ENCODE measurements at regions of chr2 and their contacts with region 1.

Region 1: GRCh38 chr2:32375228-32375892 is 18.5 kb downstream of the BIRC6 start:
- DNase-seq: no peak
- ATAC-seq: no peak
- H3K4me3 ChIP-seq: no peak overlapping the region
- H3K4me3 Mint-ChIP-seq: no peak overlapping the region
- H3K27ac ChIP-seq: no peak overlapping the region
- H3K27ac Mint-ChIP-seq: peak overlapping the region in 1 of 2 donors; percentile 22
- H3K4me1 ChIP-seq: peaks cover 8 to 10% of the 10 kb centered on the region in 2 experiments
- H3K4me1 Mint-ChIP-seq: peaks cover 56 to 74% (median 66%) of the 10 kb centered on the region in 3 donors
- H3K27me3 ChIP-seq: no peaks in the 10 kb centered on the region
- H3K27me3 Mint-ChIP-seq: no peaks in the 10 kb centered on the region

Region 2: GRCh38 chr2:32342801-32343200 is 32.6 kb before region 1 on chr2:
- CTCF ChIA-PET with region 1: interaction called in 1 of 2 experiments, 15 read pairs
- POLR2A ChIA-PET with region 1: no interaction called
- DNase-seq: no peak
- ATAC-seq: no peak
- H3K4me3 ChIP-seq: no peak overlapping the region
- H3K4me3 Mint-ChIP-seq: no peak overlapping the region
- H3K27ac ChIP-seq: no peak overlapping the region
- H3K27ac Mint-ChIP-seq: no peak overlapping the region
- H3K4me1 ChIP-seq: no peaks in the 10 kb centered on the region
- H3K4me1 Mint-ChIP-seq: no peaks in the 10 kb centered on the region
- H3K27me3 ChIP-seq: no peaks in the 10 kb centered on the region
- H3K27me3 Mint-ChIP-seq: no peaks in the 10 kb centered on the region

Region 3: DNA sequence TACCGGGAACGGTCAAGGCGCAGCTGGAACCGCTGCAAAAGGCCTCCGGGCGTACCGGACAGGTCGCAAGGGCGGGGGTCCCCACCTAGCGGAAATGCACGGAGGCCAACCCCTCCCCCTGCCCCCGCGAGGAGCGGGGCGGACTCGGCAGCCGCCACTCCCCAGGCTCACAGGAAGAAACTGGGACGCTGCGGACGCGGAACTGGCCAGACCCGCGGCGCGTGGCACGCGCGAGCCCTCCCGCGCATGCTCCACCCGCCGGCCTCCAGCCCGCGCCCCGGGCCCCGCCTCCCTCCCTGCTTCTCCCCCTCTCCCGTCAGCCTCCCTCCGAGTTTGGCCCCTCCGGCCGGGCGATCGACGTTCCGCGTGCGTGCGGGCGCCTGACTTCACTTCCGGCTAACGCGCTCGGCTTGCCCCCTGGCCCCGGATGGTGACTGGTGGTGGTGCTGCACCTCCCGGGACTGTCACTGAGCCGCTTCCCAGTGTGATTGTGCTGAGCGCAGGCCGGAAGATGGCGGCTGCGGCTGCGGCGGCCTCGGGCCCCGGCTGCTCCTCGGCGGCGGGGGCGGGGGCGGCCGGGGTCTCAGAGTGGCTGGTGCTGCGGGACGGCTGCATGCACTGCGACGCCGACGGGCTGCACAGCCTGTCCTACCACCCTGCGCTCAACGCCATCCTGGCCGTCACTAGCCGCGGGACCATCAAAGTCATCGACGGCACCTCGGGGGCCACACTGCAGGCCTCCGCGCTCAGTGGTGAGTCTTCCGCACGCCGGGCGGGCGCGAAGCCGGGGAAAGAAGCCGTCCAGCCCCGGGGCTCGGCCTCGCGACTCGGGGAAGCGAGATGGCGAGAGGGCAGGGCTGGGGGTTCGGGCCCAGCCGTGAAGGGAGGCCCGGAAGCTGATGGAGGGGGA is 18.4 kb before region 1 on chr2 and contains the start of gene BIRC6:
- CTCF ChIA-PET with region 1: interaction called in 1 of 2 experiments, 11 read pairs
- POLR2A ChIA-PET with region 1: no interaction called
- DNase-seq: peak; percentile 70 to 94 (median 80)
- ATAC-seq: peak; percentile 91 to 92 (median 91)
- H3K4me3 ChIP-seq: peak within 1 kb of the TSS; percentile 88 to 91
- H3K4me3 Mint-ChIP-seq: peak within 1 kb of the TSS; percentile 82 to 91 (median 88)
- H3K27ac ChIP-seq: peak within 1 kb of the TSS; percentile 89
- H3K27ac Mint-ChIP-seq: peak within 1 kb of the TSS; percentile 92
- H3K4me1 ChIP-seq: peaks cover 12 to 19% of the 10 kb centered on the region in 2 experiments
- H3K4me1 Mint-ChIP-seq: peaks cover 37 to 41% (median 40%) of the 10 kb centered on the region in 3 donors
- H3K27me3 ChIP-seq: no peaks in the 10 kb centered on the region
- H3K27me3 Mint-ChIP-seq: no peaks in the 10 kb centered on the region
- total RNA-seq, gene BIRC6: 106 to 179 (median 121) TPM

Region 4: DNA sequence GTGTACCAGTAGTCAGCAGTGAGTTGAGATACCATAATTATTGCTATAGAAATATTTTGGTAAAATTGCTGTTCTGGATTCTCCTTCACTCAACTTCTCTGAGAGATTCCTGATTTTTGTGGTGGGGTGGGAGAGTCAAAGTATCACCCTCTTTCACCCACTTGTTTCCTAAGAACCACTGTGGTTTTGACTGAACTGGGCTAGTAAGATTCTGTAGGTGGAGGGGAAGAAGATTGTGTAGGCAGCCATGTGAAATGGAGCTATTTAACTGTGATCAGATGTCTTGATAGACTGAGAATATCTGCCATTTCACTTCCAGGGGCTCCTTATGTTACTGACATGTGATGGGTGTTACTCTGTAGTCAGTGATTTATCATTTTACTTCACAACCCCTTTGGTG is 26.7 kb after region 1 on chr2:
- CTCF ChIA-PET with region 1: no interaction called
- POLR2A ChIA-PET with region 1: no interaction called
- DNase-seq: no peak
- ATAC-seq: no peak
- H3K4me3 ChIP-seq: no peak overlapping the region
- H3K4me3 Mint-ChIP-seq: no peak overlapping the region
- H3K27ac ChIP-seq: no peak overlapping the region
- H3K27ac Mint-ChIP-seq: peak overlapping the region; percentile 33 to 50
- H3K4me1 ChIP-seq: no peaks in the 10 kb centered on the region
- H3K4me1 Mint-ChIP-seq: peaks cover 4 to 11% (median 9%) of the 10 kb centered on the region in 3 donors
- H3K27me3 ChIP-seq: no peaks in the 10 kb centered on the region
- H3K27me3 Mint-ChIP-seq: no peaks in the 10 kb centered on the region

Region 5: DNA sequence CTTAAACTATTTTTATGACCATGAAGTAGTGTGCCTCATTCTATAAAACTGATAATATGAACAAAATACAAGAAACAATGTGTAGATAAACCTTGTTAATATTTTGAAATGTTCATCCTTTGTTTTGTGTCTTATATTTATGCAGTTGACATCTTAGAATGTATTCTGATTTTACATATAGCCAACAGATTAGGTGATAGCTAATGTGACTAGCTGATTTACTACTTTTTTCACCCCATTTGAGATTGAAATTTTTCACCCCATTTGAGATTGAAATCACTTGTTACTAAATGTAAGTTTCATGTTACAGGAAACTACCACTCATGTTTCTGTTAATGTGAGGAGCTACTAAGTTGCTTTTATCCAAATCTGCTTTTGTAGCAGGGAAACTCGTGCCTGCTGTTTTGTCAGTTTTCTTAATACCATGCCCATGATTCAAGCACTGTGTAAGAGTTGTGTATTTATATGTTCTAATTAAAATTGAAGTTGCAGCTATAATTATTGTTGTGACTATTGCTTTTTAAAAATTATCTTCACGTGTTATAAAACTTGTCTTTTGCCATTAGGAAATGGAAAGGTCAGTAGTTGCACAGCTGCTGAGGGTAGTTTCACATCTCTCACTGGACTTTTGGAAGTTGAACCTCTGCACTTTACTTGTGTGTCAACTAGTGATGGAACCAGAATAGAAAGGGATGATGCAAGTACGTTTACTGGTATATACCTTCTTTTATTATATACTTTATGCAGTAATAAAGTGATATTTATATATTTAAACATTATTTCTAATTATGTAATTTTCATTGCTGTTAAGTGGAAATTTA is 78.1 kb after region 1 on chr2:
- CTCF ChIA-PET with region 1: no interaction called
- POLR2A ChIA-PET with region 1: no interaction called
- DNase-seq: no peak
- ATAC-seq: no peak
- H3K4me3 ChIP-seq: no peak overlapping the region
- H3K4me3 Mint-ChIP-seq: no peak overlapping the region
- H3K27ac ChIP-seq: no peak overlapping the region
- H3K27ac Mint-ChIP-seq: peak overlapping the region; percentile 12 to 45
- H3K4me1 ChIP-seq: no peaks in the 10 kb centered on the region
- H3K4me1 Mint-ChIP-seq: peaks cover 0 to 21% (median 16%) of the 10 kb centered on the region in 3 donors
- H3K27me3 ChIP-seq: no peaks in the 10 kb centered on the region
- H3K27me3 Mint-ChIP-seq: no peaks in the 10 kb centered on the region